ENCODE measurements at regions of chr3 and their contacts with region 1.

Region 1: DNA sequence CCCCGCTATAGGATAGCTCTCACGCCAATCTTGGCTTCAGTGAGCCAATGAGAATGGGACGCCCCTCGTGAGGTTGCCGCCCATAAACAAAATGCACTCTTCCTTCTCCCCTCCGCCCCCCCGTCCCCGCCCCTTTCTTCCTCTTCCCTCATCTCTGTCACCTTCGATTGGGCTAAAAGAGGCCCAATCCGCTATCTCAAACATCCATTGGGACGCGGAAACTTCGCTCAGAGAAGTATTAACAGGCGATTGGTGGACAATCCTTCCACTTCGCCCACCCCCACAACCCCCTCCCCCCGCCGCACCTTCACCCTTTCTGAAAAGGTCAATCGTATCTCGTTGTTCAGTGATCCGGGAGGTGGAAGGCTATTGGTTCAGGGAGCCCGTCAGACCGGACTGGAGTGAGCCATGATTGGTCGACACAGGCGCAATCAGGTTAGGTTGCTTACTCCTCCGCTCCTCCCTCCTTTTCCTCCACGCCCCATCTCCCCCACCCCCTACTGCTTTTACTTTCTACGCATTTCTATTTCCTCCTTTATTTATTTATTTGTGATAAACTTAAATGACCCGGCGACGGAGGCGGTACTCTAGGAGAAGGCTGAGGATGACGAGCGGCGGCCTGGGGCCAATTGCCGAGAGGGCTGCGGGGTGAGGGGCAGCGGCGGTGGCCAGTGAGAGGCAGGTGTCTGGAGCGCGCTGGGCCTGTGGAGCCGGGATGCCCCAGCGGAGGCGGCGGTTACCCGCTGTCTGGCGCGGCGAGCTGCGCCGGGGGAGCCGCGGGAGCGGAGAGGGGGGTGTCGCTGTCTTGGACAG is 447 bp upstream of the ZBTB20 start:
- DNase-seq: peak; percentile 96 to 100 (median 98)

Region 2: DNA sequence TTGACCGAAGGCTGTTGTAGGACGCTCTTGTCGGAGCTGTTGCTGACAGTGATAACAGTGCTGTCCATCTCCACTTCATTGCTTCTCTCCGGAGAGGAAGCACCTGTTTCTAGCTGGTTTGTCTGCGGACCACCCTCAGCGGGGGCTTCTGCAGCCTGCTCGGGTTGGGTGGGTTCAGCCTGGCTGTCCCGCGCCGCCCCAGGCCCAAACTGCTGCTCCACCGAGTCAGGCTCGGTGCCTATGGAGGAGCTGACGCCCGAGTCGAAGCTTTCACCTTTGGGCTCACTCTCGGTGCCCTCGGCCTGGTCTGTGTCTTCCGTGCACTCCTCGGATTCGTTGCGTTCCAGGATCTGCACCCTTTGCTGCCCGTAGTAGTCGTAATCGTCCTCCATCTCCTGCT is 796.8 kb before region 1 on chr3:
- intact Hi-C with region 1: no loop called
- DNase-seq: no peak

Region 3: DNA sequence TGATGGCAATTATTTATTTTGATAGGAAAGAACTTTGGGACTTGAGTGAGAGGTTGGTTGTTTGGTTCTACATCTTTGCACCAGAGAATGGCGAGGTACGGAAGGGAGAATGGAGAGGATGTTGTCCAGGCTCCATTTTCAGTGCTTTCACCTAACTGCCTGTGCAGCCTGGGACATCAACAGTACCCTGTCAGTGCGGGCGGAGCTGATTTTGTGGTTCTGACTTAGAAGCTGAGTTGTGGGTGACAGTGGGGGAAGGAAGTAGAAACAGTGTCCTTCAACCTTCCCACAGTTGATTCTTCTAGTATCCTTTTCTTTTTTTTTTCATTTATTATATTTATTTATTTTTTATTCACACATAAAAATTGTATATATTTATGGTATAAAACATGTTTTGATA is 758.4 kb before region 1 on chr3:
- intact Hi-C with region 1: loop called (anchors 5 kb)
- DNase-seq: no peak

Region 4: GRCh38 chr3:114454551-114455251 is 692.8 kb before region 1 on chr3:
- intact Hi-C with region 1: loop called (anchors 5 kb)
- DNase-seq: peak in 2 of 10 donors; percentile 41 to 84

Region 5: GRCh38 chr3:114608293-114608692 is 539.2 kb before region 1 on chr3:
- intact Hi-C with region 1: no loop called
- DNase-seq: no peak

Region 6: GRCh38 chr3:114827495-114827894 is 320.0 kb before region 1 on chr3:
- intact Hi-C with region 1: loop called (anchors 10 kb)
- DNase-seq: no peak

Region 7: GRCh38 chr3:115092220-115092791 is 55.2 kb before region 1 on chr3:
- intact Hi-C with region 1: loop called (anchors 2 kb)
- DNase-seq: peak; percentile 52 to 96 (median 74)

Region 8: GRCh38 chr3:115099986-115100571 is 47.5 kb before region 1 on chr3:
- intact Hi-C with region 1: loop called (anchors 2 kb)
- DNase-seq: no peak

Region 9: DNA sequence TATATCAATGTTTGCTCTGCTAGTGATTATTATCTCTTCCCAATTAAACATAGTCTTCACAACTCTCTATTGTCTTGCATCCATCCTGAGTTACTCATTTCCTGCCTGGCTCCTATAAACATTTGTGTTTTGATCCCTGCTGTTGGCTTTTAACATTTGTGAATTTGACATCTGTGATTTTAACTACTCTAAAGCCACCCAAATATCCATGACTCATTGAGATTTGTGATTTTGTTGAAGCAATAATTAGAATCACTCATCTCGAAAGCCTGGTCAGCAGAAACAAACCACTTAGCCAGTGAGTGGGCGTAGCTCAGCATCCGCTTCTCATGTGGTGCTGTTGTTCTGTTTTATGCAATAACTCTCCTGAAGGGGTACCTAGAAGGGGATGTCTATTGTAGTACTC is 173.9 kb after region 1 on chr3:
- intact Hi-C with region 1: no loop called
- DNase-seq: no peak

Region 10: GRCh38 chr3:115783938-115784738 is 636.6 kb after region 1 on chr3:
- intact Hi-C with region 1: loop called (anchors 10 kb)
- DNase-seq: peak; percentile 66 to 97 (median 81)